RWPE1 (cell line): ENCODE measurements at regions of chr5 and their contacts with region 1.

Region 1: GRCh38 chr5:154610321-154611154 is 132.5 kb upstream of the HAND1 start:
- DNase-seq: peak; percentile 91
- H3K27ac ChIP-seq: no peak overlapping the region
- CTCF ChIP-seq: peak; percentile 86

Region 2: DNA sequence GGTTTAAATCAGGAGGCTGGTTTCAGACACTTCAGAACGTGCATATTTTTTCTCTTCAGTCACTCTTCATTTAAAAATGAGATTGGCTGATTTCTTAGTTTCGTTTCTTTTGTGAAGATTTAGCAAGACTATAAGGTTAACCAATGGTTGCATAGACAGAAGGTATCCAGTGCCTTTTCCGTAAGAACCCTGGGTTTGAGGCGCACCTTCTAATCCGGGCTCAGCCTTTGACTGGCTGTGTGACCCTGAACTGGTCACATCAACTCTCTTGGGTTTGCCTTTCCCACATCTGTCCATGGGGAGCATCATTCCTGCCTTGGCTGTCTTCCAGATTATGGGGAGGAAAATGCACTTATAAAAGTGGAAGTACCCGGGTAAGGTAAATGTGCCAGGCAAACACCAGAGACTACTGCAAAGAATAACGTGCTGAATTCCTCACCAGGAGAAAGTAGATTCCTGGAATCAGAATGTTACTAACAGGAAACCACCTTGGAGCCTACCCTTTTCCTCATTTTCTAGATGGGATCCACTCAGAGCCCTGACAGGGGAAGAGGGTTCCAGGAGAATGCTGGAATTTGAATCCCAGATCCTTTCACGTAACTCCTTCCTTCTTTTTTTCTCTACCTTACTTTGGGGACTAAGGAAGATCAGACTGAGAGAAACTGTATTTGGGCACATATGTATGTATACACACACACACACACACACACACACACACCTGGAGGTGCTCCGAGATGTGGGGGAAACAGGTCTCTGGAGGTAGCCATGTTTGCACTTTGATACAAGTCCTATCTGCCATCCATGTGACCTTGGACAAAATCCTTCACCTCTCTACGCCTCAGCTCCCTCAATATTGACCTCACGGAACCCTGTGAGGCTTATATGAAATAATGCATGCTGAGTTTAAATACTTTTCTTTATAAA is 139.3 kb before region 1 on chr5:
- CTCF ChIA-PET with region 1: interaction called, 11 read pairs
- POLR2A ChIA-PET with region 1: no interaction called
- DNase-seq: no peak
- H3K27ac ChIP-seq: no peak overlapping the region
- CTCF ChIP-seq: no peak